A673 (cell line): ENCODE measurements at regions of chrX and their contacts with region 1.

Region 1: GRCh38 chrX:120790118-120790517 is 85.5 kb downstream of the CT47B1 start:
- DNase-seq: peak; percentile 82
- H3K4me3 ChIP-seq: no peak overlapping the region
- H3K27ac ChIP-seq: no peak overlapping the region
- H3K4me1 ChIP-seq: no peaks in the 10 kb centered on the region
- H3K27me3 ChIP-seq: no peaks in the 10 kb centered on the region
- CTCF ChIP-seq: peak; percentile 79

Region 2: DNA sequence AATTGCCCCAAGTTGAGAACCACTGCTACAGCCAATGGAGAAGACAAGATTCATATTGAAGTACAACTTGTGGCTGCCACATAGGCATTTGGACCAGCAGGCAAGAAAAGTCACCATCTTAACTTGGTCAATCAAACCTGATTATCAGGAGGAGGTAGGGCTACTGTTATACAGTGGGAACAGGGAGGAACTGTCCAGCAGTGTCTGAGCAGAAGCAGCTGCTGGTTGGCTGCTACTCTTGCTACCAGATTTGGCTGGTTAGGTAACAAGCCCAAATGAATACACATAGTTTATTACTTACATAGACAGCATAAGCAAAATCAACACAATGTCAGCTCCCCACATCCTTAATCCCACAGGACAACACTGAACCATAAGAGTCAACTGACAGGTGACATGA is 388.8 kb before region 1 on chrX:
- CTCF ChIA-PET with region 1: no interaction called
- POLR2A ChIA-PET with region 1: no interaction called
- intact Hi-C with region 1: no loop called
- DNase-seq: no peak
- H3K4me3 ChIP-seq: no peak overlapping the region
- H3K27ac ChIP-seq: no peak overlapping the region
- H3K4me1 ChIP-seq: no peaks in the 10 kb centered on the region
- H3K27me3 ChIP-seq: no peaks in the 10 kb centered on the region
- CTCF ChIP-seq: no peak

Region 3: DNA sequence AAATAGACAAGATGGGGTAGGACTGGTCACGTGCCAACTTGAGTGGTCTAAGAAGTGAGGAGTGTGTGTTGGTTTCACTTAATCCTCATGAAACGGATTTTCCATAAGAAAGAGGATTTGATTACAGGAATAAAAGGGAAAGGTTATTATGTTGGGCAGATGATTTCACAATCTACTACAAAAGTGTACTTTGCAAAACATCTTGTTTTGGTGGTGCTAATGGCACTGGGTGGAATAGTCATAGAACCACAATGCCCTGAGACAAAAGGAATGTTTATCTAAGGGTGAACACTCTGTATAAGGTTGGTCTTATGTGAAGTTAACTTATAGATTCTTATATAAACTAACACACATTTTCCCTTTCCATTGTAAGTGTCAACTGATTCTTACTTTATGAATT is 302.9 kb after region 1 on chrX:
- CTCF ChIA-PET with region 1: no interaction called
- POLR2A ChIA-PET with region 1: no interaction called
- intact Hi-C with region 1: no loop called
- DNase-seq: no peak
- H3K4me3 ChIP-seq: no peak overlapping the region
- H3K27ac ChIP-seq: no peak overlapping the region
- H3K4me1 ChIP-seq: no peaks in the 10 kb centered on the region
- H3K27me3 ChIP-seq: no peaks in the 10 kb centered on the region
- CTCF ChIP-seq: no peak

Region 4: GRCh38 chrX:121216641-121217374 is 426.7 kb after region 1 on chrX:
- CTCF ChIA-PET with region 1: no interaction called
- POLR2A ChIA-PET with region 1: no interaction called
- intact Hi-C with region 1: no loop called
- DNase-seq: no peak
- H3K4me3 ChIP-seq: no peak overlapping the region
- H3K27ac ChIP-seq: no peak overlapping the region
- H3K4me1 ChIP-seq: no peaks in the 10 kb centered on the region
- H3K27me3 ChIP-seq: no peaks in the 10 kb centered on the region
- CTCF ChIP-seq: no peak

Region 5: DNA sequence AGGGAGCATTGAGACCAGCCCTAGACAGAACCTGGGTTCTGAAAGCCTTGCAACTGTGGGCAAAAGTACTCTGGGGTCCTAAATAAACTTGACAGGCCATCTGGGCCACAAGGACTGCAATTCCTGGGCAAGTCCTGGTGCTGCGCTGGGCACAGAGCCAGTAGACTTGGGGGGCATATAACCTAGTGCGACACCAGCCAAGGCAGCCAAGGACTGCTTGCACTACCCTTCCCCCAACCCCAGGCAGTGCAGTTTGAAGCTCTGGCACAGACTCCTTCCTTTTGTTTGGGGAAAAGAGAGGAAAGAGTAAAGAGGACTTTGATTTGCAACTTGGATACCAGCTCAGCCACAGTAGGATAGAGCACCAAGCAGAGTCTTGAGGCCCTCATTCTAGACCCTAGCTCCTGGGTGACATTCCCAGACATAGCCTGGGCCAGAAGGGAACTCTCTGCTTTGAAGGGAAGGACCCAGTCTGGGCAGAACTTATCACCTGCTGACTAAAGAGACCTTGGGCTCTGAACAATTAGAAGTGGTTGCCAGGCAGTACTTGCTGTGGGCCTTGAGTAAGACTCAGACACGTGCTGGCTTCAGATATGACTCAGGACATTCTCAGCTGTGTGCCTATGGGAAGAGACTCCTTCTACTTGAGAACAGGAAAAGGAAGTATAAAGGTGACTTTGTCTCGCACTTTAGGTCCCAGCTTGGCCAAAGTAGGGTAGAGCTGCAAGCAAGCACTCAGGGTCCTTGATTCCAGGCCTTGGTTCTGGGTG is 780.1 kb after region 1 on chrX:
- CTCF ChIA-PET with region 1: no interaction called
- POLR2A ChIA-PET with region 1: no interaction called
- intact Hi-C with region 1: loop called (anchors 2 kb)
- DNase-seq: no peak
- H3K4me3 ChIP-seq: no peak overlapping the region
- H3K27ac ChIP-seq: no peak overlapping the region
- H3K4me1 ChIP-seq: no peaks in the 10 kb centered on the region
- H3K27me3 ChIP-seq: no peaks in the 10 kb centered on the region
- CTCF ChIP-seq: no peak